Activated B cell treated with CpG ODN at 0.5 μM for 24 hours (primary cell): ENCODE measurements at regions of chr18 and their contacts with region 1.

Region 1: DNA sequence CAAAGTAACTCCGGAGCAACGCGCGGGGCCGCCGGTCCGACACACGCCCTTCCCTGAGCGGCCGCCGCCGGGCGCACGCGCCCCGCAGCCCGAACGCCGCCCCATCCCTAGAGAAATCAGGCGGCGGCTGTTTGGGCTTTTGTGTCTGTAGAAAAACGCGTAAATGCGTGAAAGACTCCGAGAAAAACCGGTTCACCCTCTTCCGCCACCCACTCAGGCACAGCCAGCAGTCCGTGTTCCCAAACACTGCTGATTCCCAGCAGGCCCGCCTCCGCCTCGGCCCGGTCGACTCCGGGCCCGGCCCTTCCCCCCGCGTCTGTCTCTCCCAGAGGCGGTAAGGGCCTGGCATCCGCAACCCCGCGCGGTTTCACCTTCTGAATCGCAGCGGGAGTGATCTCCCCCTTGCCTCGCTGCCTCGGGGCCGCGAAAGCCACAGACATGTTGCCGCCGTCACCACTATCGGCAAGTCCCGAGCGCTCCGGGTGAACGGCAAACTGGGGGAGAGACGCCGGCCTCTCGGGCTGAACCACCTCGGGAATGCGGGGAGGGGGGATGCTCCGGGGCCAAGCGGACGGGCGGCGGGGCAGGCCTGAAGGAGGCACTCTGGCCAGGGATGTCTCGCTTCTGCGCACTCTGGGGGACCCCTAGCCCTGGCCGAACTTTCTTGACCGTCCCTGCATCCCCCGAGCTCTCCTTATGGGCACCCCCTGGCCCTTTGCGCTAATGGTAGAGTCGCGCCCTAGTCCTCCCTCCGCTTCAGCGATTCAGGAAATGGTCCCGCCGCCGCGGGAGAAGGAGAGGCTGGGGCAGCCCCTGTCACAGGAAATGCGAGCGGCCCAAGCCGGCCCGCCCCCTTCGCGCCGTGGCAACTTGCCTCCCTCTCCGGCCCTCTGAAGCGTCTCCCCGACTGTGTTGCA is at the start of gene SS18:
- DNase-seq: peak; percentile 90
- ATAC-seq: peak; percentile 81
- H3K4me3 Mint-ChIP-seq: peak within 1 kb of the TSS; percentile 95
- H3K27ac Mint-ChIP-seq: peak within 1 kb of the TSS; percentile 97
- H3K4me1 Mint-ChIP-seq: peaks cover 46% of the 10 kb centered on the region
- H3K27me3 Mint-ChIP-seq: no peaks in the 10 kb centered on the region
- CTCF ChIP-seq: no peak
- total RNA-seq, gene SS18: 86.4 and 99.7 TPM in 2 replicates

Region 2: DNA sequence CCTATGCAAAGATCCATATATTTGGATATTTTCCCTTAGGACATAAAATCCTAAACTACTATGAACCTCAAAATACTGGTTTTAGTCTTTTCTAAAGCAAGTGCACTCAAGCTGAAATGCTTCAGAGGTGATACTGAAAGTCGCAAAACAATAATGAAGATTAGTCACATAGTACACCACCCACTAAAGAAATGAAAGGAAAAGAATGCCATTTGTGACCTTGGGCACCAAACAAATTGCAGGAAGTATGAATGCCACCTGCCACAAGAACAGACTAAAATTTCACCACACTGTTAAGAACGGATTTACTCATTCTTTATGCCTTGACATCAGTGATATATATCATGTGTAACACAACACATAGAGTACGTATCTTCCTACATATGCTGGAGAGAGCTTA is 899.9 kb before region 1 on chr18:
- CTCF ChIA-PET with region 1: no interaction called
- POLR2A ChIA-PET with region 1: no interaction called
- intact Hi-C with region 1: no loop called
- DNase-seq: no peak
- ATAC-seq: no peak
- H3K4me3 Mint-ChIP-seq: no peak overlapping the region
- H3K27ac Mint-ChIP-seq: no peak overlapping the region
- H3K4me1 Mint-ChIP-seq: no peaks in the 10 kb centered on the region
- H3K27me3 Mint-ChIP-seq: no peaks in the 10 kb centered on the region
- CTCF ChIP-seq: no peak

Region 3: GRCh38 chr18:25351777-25352628 is 738.4 kb before region 1 on chr18 and contains the start of gene ZNF521:
- CTCF ChIA-PET with region 1: no interaction called
- POLR2A ChIA-PET with region 1: no interaction called
- intact Hi-C with region 1: loop called (anchors 5 kb)
- DNase-seq: peak; percentile 46
- ATAC-seq: peak; percentile 90
- H3K4me3 Mint-ChIP-seq: peak within 1 kb of the TSS; percentile 83
- H3K27ac Mint-ChIP-seq: peak within 1 kb of the TSS; percentile 42
- H3K4me1 Mint-ChIP-seq: peaks cover 23% of the 10 kb centered on the region
- H3K27me3 Mint-ChIP-seq: peaks cover 39% of the 10 kb centered on the region
- CTCF ChIP-seq: no peak
- total RNA-seq, gene ZNF521: 0.16 and 0.61 TPM in 2 replicates

Region 4: GRCh38 chr18:26073758-26074157 is 16.6 kb before region 1 on chr18:
- CTCF ChIA-PET with region 1: no interaction called
- POLR2A ChIA-PET with region 1: no interaction called
- intact Hi-C with region 1: loop called (anchors 1 kb)
- DNase-seq: no peak
- ATAC-seq: no peak
- H3K4me3 Mint-ChIP-seq: no peak overlapping the region
- H3K27ac Mint-ChIP-seq: no peak overlapping the region
- H3K4me1 Mint-ChIP-seq: peaks cover 22% of the 10 kb centered on the region
- H3K27me3 Mint-ChIP-seq: no peaks in the 10 kb centered on the region
- CTCF ChIP-seq: no peak

Region 5: DNA sequence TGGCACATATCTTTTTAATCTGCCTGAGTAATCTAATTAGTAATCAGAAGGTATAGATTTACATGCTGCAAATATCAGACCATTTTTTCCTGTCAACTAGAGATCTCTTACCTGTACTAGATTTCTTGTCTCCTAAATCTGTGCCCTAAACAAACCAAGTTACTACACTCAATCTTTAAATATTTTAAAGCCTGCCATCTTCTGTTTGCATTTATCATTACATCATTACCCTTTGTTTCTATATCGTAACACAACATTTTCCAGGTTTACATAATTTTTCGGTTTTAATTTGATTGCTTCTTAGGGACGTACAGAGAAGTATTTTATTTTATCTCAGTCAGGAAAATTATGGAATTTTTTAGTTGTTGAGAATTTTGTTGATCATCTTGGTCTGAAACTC is 69.0 kb after region 1 on chr18:
- CTCF ChIA-PET with region 1: no interaction called
- POLR2A ChIA-PET with region 1: no interaction called
- intact Hi-C with region 1: loop called (anchors 1 kb)
- DNase-seq: no peak
- ATAC-seq: no peak
- H3K4me3 Mint-ChIP-seq: no peak overlapping the region
- H3K27ac Mint-ChIP-seq: no peak overlapping the region
- H3K4me1 Mint-ChIP-seq: peaks cover 8% of the 10 kb centered on the region
- H3K27me3 Mint-ChIP-seq: no peaks in the 10 kb centered on the region
- CTCF ChIP-seq: no peak

Region 6: GRCh38 chr18:26226229-26227005 is 136.0 kb after region 1 on chr18 and contains the start of gene TAF4B:
- CTCF ChIA-PET with region 1: interaction called, 3 read pairs
- POLR2A ChIA-PET with region 1: interaction called, 18 read pairs
- intact Hi-C with region 1: loop called (anchors 1 kb)
- DNase-seq: peak; percentile 95
- ATAC-seq: peak; percentile 83
- H3K4me3 Mint-ChIP-seq: peak within 1 kb of the TSS; percentile 96
- H3K27ac Mint-ChIP-seq: peak within 1 kb of the TSS; percentile 97
- H3K4me1 Mint-ChIP-seq: peaks cover 22% of the 10 kb centered on the region
- H3K27me3 Mint-ChIP-seq: no peaks in the 10 kb centered on the region
- CTCF ChIP-seq: no peak
- total RNA-seq, gene TAF4B: 11.6 and 13.4 TPM in 2 replicates

Region 7: DNA sequence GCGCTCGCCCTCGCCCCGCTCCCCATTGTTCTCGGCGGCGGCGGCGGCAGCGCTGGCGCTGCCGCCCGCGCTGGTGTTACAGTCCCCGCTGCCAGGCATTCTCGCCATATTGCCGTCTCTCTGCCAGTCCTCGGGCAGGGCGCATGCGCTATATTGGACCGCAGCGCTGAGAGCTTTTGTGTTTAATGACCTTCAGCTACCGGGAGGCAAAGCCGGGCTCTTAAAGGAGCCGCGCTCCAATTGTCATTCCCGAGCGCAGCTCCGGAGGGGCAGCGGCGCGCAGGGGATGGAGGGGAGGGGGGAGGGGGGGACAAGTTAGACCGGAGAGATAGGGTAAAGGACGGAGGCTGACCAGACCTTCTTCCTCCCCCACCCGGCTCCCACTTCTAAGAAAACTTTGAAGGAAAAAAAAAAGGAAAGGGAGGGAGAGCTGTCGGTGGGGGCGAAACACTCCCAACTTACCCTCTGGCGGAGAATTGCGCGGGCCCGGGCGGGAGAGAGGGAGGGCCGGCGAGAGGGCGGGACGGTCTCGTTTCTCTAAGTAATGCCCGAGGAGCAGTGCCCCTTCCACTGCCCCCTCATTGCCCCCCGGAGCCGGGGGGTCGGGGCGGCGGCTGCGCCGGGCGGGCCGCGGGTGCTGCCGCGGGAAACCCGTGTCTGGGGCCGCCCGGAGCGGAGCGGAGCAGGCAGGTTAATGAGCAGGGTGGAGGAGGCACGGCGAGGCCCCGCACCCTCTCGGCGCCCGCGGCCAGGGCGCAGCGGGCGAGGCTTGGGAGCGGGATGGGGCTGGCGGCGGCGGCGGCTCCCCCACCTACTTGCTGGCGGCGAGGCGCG is 458.3 kb after region 1 on chr18 and contains the start of gene KCTD1:
- CTCF ChIA-PET with region 1: no interaction called
- POLR2A ChIA-PET with region 1: no interaction called
- intact Hi-C with region 1: loop called (anchors 2 kb)
- DNase-seq: peak; percentile 56
- ATAC-seq: peak; percentile 73
- H3K4me3 Mint-ChIP-seq: peak within 1 kb of the TSS; percentile 89
- H3K27ac Mint-ChIP-seq: no peak within 1 kb of the TSS
- H3K4me1 Mint-ChIP-seq: peaks cover 47% of the 10 kb centered on the region
- H3K27me3 Mint-ChIP-seq: peaks cover 21% of the 10 kb centered on the region
- CTCF ChIP-seq: no peak
- total RNA-seq, gene KCTD1: 3.7 and 4.9 TPM in 2 replicates

Region 8: DNA sequence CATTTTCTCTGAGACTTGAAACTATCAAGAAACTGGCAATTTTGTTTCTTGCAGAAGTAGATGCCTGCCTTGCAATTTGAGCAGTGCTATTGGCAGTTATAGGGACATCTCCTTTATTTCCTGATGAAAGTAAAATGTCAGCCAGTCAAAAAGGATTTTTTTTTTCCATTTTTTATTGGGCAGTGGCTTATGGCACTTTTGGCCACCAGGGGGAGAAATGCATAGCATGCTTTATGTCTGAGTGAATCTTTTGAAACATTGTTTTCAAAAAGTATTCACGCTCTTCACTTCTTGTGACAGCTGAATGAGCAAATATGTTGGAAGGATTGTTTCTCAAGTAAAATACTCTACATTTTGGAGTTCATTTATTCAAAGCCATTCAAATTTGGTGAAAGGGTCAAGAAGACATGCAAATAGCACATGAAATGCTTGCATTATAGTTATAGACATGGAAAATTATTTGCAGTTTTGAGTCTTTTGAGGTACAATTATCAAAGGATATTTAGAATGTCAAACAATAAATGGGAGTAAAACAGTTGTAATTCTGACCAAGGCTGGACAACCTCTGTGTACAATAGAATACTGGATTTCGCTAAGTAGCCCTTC is 1595.5 kb after region 1 on chr18:
- CTCF ChIA-PET with region 1: no interaction called
- POLR2A ChIA-PET with region 1: no interaction called
- intact Hi-C with region 1: no loop called
- DNase-seq: no peak
- ATAC-seq: no peak
- H3K4me3 Mint-ChIP-seq: no peak overlapping the region
- H3K27ac Mint-ChIP-seq: no peak overlapping the region
- H3K4me1 Mint-ChIP-seq: no peaks in the 10 kb centered on the region
- H3K27me3 Mint-ChIP-seq: no peaks in the 10 kb centered on the region
- CTCF ChIP-seq: no peak